GM23248 (cell line): ENCODE measurements at regions of chr11 and their contacts with region 1.

Region 1: GRCh38 chr11:85809863-85810262 is 1.1 kb downstream of the SYTL2 start:
- DNase-seq: no peak
- H3K4me3 ChIP-seq: no peak overlapping the region
- H3K27ac ChIP-seq: no peak overlapping the region
- H3K4me1 ChIP-seq: peaks cover 3% of the 10 kb centered on the region
- H3K27me3 ChIP-seq: no peaks in the 10 kb centered on the region

Region 2: DNA sequence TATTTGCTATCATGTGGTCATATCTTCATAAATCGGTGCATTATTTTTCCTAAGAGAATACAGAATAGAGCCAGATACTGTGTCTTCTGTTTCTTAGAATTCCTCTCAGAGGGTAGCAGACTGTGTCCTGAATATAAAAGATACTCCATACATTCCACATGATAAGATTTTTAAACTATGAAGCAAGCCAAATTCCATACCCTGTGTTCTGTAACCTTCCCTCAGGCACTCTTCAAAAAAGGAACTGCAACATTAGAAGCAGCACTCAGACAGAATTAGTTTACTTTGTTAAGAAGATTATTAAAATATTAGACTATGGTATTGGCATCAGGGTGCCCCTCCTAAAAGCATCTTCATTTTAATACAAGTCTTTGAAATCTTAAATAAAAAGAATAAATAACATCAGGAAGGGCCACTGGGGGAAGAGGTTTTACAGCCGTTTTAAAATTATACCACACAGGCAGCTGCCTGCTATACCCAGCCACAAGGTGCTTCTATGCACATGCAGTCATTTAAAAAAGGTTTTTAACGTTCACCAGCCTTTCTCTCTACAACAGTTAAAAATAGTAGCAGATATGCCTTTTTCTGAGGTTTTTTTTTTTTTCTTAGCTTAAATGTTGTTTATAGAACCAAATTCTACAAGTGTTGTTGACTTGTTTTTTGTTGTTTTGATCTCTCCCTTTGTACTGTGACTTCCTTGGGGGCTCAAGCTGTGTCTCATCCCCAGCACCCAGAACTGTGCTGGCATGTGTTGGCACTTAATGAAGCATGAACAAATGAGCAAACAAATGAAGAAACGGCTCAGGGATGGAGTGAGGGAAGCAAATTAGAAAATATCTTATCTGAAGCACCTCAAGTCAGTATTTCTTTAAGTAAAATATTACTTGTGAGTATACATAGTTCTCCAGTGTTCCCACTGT is 69.1 kb before region 1 on chr11:
- in situ Hi-C with region 1: loop called (anchors 10 kb)
- DNase-seq: no peak
- H3K4me3 ChIP-seq: no peak overlapping the region
- H3K27ac ChIP-seq: no peak overlapping the region
- H3K4me1 ChIP-seq: peaks cover 9% of the 10 kb centered on the region; the same call in 1 of the 2 replicates
- H3K27me3 ChIP-seq: no peaks in the 10 kb centered on the region